ENCODE measurements at regions of chrX and their contacts with region 1.

Region 1: DNA sequence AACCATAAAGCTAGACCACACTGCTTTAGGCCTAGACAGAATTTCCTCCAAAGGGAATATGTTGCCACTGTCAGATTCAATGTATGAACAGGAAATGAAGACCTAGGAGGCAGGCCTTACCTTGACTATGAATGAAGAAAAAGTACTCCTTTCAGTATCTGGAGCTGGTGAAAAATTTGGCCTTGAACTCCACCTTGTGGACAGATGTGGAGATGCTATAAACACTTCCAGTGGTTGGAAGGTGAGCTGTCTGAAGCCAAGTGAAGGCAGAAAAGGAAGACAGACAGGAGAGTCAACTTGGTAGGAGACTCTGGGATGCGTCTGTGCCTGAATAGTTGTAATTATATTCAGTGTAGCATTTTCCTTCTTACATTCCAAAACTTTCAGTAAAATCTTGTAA is 17.2 kb downstream of the SPIN3 start:
- DNase-seq: peak; percentile 15
- ATAC-seq: peak; percentile 74
- H3K4me3 ChIP-seq: no peak overlapping the region
- H3K27ac ChIP-seq: no peak overlapping the region
- H3K4me1 ChIP-seq: no peaks in the 10 kb centered on the region
- H3K27me3 ChIP-seq: no peaks in the 10 kb centered on the region
- CTCF ChIP-seq: peak; percentile 44 to 61 (median 49); a peak in 5 of 6 replicates
- POLR2A ChIP-seq: no peak
- RAD21 ChIP-seq: peak; percentile 73

Region 2: DNA sequence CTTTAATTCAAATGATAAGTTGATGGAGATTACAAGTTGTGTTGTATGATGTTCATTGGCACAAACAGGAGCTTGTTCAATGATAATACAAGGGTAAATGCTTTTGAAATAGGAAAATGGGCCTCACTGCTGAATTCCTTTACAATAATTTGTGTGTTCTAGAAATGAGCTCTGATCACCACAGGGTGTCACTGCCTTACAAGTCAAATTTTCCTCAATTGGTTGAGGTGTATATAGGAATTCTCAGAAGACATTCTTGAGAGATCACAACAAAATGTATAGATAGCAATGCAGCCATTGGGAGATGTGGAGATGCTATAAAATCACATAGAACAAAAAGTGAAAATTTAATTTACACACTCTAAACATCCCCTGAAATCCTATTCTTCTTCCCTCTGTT is 696.4 kb before region 1 on chrX:
- CTCF ChIA-PET with region 1: no interaction called
- POLR2A ChIA-PET with region 1: no interaction called
- RAD21 ChIA-PET with region 1: no interaction called
- intact Hi-C with region 1: loop called (anchors 10 kb)
- DNase-seq: peak; percentile 3
- ATAC-seq: no peak
- H3K4me3 ChIP-seq: no peak overlapping the region
- H3K27ac ChIP-seq: no peak overlapping the region
- H3K4me1 ChIP-seq: no peaks in the 10 kb centered on the region
- H3K27me3 ChIP-seq: no peaks in the 10 kb centered on the region
- CTCF ChIP-seq: peak; percentile 7 to 35 (median 12); a peak in 3 of 6 replicates
- POLR2A ChIP-seq: no peak
- RAD21 ChIP-seq: peak; percentile 57